AG04449 (cell line): ENCODE measurements at regions of chr15 and their contacts with region 1.

Region 1: GRCh38 chr15:74373731-74374647 is 6.5 kb upstream of the CYP11A1 start:
- DNase-seq: no peak
- H3K4me3 ChIP-seq: peak overlapping the region; percentile 75
- CTCF ChIP-seq: peak; percentile 93

Region 2: GRCh38 chr15:74460871-74461846 is 87.2 kb after region 1 on chr15 and contains the start of gene UBL7:
- CTCF ChIA-PET with region 1: interaction called, 1,700 read pairs
- POLR2A ChIA-PET with region 1: interaction called, 3 read pairs
- DNase-seq: peak; percentile 67
- H3K4me3 ChIP-seq: peak within 1 kb of the TSS; percentile 92
- CTCF ChIP-seq: peak; percentile 38

Region 3: GRCh38 chr15:74598126-74598842 is 224.3 kb after region 1 on chr15:
- CTCF ChIA-PET with region 1: interaction called, 12 read pairs
- POLR2A ChIA-PET with region 1: no interaction called
- DNase-seq: peak; percentile 23
- H3K4me3 ChIP-seq: peak overlapping the region; percentile 75
- CTCF ChIP-seq: no peak

Region 4: GRCh38 chr15:74635228-74635627 is 261.2 kb after region 1 on chr15:
- CTCF ChIA-PET with region 1: interaction called, 159 read pairs
- POLR2A ChIA-PET with region 1: no interaction called
- DNase-seq: no peak
- H3K4me3 ChIP-seq: no peak overlapping the region
- CTCF ChIP-seq: peak; percentile 86